ENCODE measurements at regions of chr4 and their contacts with region 1.

Region 1: GRCh38 chr4:183840311-183840710 is 64.8 kb upstream of the STOX2 start:
- DNase-seq: peak; percentile 84 to 92 (median 88)
- ATAC-seq: peak; percentile 76 to 84
- H3K4me3 ChIP-seq: no peak overlapping the region
- H3K27ac ChIP-seq: no peak overlapping the region
- H3K4me1 ChIP-seq: peaks cover 2% of the 10 kb centered on the region
- H3K27me3 ChIP-seq: no peaks in the 10 kb centered on the region

Region 2: GRCh38 chr4:183987987-183988392 is 147.7 kb after region 1 on chr4:
- intact Hi-C with region 1: loop called in 1 of 4 experiments (anchors 10 kb)
- DNase-seq: peak; percentile 71 to 76 (median 72)
- ATAC-seq: peak; percentile 92 to 95
- H3K4me3 ChIP-seq: peak overlapping the region; percentile 33
- H3K27ac ChIP-seq: peak overlapping the region; percentile 79
- H3K4me1 ChIP-seq: peaks cover 2% of the 10 kb centered on the region
- H3K27me3 ChIP-seq: no peaks in the 10 kb centered on the region

Region 3: DNA sequence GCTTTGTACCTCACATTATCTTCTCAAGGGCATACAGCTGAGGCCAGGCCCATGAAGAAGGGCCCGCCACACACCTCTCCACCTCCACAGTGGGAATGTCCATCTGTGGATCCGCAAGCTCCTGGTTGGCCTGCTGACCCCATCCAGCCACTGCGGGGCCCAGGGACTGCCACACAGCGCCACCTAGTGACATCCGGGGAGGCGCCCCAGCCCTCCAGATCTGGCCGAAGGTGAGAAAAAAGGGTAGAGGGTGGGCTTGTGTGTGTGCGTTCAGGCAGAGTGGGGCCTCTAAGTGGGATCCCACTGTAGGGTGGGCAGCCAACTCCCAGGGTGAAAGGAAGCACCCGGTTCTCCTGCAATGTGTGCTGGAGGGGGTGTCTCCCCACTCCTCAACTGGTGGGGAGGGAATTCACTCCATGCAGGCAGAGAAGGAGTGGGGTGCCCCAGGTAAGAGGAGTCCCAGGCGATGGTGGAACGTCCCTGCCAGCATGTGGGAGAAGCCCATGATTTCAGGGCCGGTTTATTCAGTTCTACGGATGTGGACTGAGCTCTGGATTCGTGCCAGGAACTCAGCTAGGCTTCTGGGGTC is 260.1 kb after region 1 on chr4:
- intact Hi-C with region 1: loop called (anchors 5 to 10 kb)
- DNase-seq: peak; percentile 39 to 87 (median 78)
- ATAC-seq: peak; percentile 66 to 80
- H3K4me3 ChIP-seq: no peak overlapping the region
- H3K27ac ChIP-seq: no peak overlapping the region
- H3K4me1 ChIP-seq: no peaks in the 10 kb centered on the region
- H3K27me3 ChIP-seq: no peaks in the 10 kb centered on the region

Measured in right cardiac atrium (tissue), 5 donors.